ENCODE measurements at regions of chr1 and their contacts with region 1.

Region 1: GRCh38 chr1:236103646-236104218 is 38.6 kb upstream of the GPR137B start:
- DNase-seq: peak; percentile 56
- H3K4me3 ChIP-seq: no peak overlapping the region
- H3K27ac ChIP-seq: no peak overlapping the region
- H3K4me1 ChIP-seq: no peaks in the 10 kb centered on the region
- H3K27me3 ChIP-seq: no peaks in the 10 kb centered on the region
- CTCF ChIP-seq: peak; percentile 64

Region 2: GRCh38 chr1:235990376-235991085 is 113.2 kb before region 1 on chr1:
- CTCF ChIA-PET with region 1: no interaction called
- POLR2A ChIA-PET with region 1: no interaction called
- intact Hi-C with region 1: no loop called
- DNase-seq: no peak
- H3K4me3 ChIP-seq: no peak overlapping the region
- H3K27ac ChIP-seq: no peak overlapping the region
- H3K4me1 ChIP-seq: no peaks in the 10 kb centered on the region
- H3K27me3 ChIP-seq: no peaks in the 10 kb centered on the region
- CTCF ChIP-seq: no peak

Region 3: GRCh38 chr1:236247286-236247685 is 143.6 kb after region 1 on chr1:
- CTCF ChIA-PET with region 1: no interaction called
- POLR2A ChIA-PET with region 1: no interaction called
- intact Hi-C with region 1: no loop called
- DNase-seq: no peak
- H3K4me3 ChIP-seq: no peak overlapping the region
- H3K27ac ChIP-seq: no peak overlapping the region
- H3K4me1 ChIP-seq: no peaks in the 10 kb centered on the region
- H3K27me3 ChIP-seq: no peaks in the 10 kb centered on the region
- CTCF ChIP-seq: no peak

Region 4: GRCh38 chr1:236489710-236490377 is 386.1 kb after region 1 on chr1:
- CTCF ChIA-PET with region 1: no interaction called
- POLR2A ChIA-PET with region 1: no interaction called
- intact Hi-C with region 1: loop called (anchors 5 kb)
- DNase-seq: peak; percentile 51
- H3K4me3 ChIP-seq: no peak overlapping the region
- H3K27ac ChIP-seq: no peak overlapping the region
- H3K4me1 ChIP-seq: no peaks in the 10 kb centered on the region
- H3K27me3 ChIP-seq: no peaks in the 10 kb centered on the region
- CTCF ChIP-seq: peak; percentile 54

Region 5: GRCh38 chr1:236530959-236531358 is 427.2 kb after region 1 on chr1:
- CTCF ChIA-PET with region 1: interaction called, 4 read pairs
- POLR2A ChIA-PET with region 1: no interaction called
- intact Hi-C with region 1: loop called (anchors 2 kb)
- DNase-seq: no peak
- H3K4me3 ChIP-seq: no peak overlapping the region
- H3K27ac ChIP-seq: no peak overlapping the region
- H3K4me1 ChIP-seq: peaks cover 9% of the 10 kb centered on the region
- H3K27me3 ChIP-seq: no peaks in the 10 kb centered on the region
- CTCF ChIP-seq: no peak

Region 6: GRCh38 chr1:236654957-236655356 is 551.2 kb after region 1 on chr1:
- CTCF ChIA-PET with region 1: no interaction called
- POLR2A ChIA-PET with region 1: no interaction called
- intact Hi-C with region 1: no loop called
- DNase-seq: peak; percentile 86
- H3K4me3 ChIP-seq: peak overlapping the region; percentile 10
- H3K27ac ChIP-seq: peak overlapping the region; percentile 95
- H3K4me1 ChIP-seq: peaks cover 31% of the 10 kb centered on the region
- H3K27me3 ChIP-seq: no peaks in the 10 kb centered on the region
- CTCF ChIP-seq: no peak

Measured in A673 (cell line).